Upper lobe of right lung (tissue), 1 donor: ENCODE measurements at regions of chr1 and their contacts with region 1.

Region 1: GRCh38 chr1:7667625-7668218 is 103.4 kb upstream of the VAMP3 start:
- DNase-seq: peak; percentile 93
- ATAC-seq: peak; percentile 93
- H3K4me3 ChIP-seq: no peak overlapping the region
- H3K27ac ChIP-seq: no peak overlapping the region
- H3K4me1 ChIP-seq: peaks cover 7% of the 10 kb centered on the region
- H3K27me3 ChIP-seq: peaks cover 5% of the 10 kb centered on the region
- CTCF ChIP-seq: peak; percentile 100

Region 2: GRCh38 chr1:7752512-7753417 is 85.0 kb after region 1 on chr1:
- intact Hi-C with region 1: loop called (anchors 5 kb)
- DNase-seq: no peak
- ATAC-seq: peak; percentile 88
- H3K4me3 ChIP-seq: peak overlapping the region; percentile 27
- H3K27ac ChIP-seq: peak overlapping the region; percentile 2
- H3K4me1 ChIP-seq: peaks cover 16% of the 10 kb centered on the region
- H3K27me3 ChIP-seq: no peaks in the 10 kb centered on the region
- CTCF ChIP-seq: peak; percentile 82

Region 3: DNA sequence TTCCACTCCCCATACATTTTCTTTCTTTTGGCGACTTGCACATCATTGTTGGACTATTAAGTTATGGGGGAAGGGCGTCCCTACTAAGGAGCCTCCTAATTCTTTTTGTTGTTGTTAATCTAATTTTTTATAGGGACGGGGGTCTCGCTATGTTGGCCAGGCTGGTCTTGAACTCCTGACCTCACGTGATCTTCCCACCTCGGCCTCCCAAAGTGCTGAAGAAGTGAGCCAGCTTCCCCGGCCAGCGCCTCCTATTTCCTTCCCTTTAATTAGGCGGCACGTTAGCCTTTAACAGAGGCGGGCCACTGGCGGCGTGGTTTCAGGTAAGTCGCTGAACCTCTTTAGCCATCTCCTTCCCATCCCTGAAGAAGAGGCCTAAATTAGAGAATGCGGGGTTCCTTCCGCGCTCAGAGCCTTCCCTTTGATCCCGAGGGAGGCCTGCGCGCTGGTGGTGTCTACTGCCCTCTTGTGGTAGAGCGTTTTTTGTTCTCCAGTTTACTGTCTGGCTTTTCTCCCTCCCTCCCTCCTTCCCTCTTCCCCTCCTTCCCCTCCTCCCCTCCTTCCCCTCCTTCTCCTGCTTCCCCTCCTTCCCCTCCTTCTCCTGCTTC is 234.9 kb after region 1 on chr1:
- intact Hi-C with region 1: loop called (anchors 5 kb)
- DNase-seq: peak; percentile 73
- ATAC-seq: peak; percentile 98
- H3K4me3 ChIP-seq: no peak overlapping the region
- H3K27ac ChIP-seq: no peak overlapping the region
- H3K4me1 ChIP-seq: no peaks in the 10 kb centered on the region
- H3K27me3 ChIP-seq: no peaks in the 10 kb centered on the region
- CTCF ChIP-seq: peak; percentile 68